ENCODE measurements at regions of chr3 and their contacts with region 1.

Region 1: DNA sequence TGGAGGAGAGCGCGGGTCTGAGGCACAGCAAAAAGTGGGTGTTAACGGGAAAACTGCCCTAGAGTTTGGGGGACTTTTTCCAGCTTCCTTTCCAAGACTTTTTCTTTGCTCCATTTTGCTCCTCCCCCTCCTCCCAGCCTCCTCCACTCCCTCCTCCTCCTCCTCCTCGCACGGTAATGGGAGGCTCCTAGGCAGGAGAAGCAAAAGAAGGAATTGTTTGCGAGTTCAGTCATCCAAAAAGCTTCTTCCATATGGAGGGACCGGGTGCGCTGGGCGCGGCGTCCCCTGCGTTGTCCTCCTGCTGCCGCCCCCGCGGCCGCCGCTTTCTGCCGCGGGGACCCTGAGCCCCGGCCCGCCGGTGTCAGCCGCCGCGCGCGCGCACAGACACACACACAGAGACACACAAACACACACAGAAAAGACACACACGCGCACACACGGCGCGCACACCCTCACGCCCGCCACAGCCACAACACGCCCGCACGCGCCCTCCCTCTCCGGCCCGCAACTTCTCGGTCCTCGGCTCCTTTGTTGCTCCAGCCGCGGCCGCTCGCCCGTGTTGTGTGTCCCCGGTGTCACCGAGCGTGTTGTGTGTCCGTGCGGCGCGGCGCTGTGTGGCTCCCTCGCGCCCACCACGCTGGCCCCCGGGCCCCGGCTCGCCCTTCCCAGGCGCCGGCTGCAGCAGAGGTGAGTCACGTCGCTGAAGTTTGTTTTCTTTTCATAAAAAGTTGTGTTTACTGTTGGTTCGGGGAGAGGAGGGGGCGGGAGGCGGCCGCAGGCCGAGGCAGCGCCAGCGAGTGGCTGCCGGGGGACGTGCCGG is at the start of gene BOC:
- DNase-seq: peak in 3 of 10 donors; percentile 18 to 86 (median 86)

Region 2: DNA sequence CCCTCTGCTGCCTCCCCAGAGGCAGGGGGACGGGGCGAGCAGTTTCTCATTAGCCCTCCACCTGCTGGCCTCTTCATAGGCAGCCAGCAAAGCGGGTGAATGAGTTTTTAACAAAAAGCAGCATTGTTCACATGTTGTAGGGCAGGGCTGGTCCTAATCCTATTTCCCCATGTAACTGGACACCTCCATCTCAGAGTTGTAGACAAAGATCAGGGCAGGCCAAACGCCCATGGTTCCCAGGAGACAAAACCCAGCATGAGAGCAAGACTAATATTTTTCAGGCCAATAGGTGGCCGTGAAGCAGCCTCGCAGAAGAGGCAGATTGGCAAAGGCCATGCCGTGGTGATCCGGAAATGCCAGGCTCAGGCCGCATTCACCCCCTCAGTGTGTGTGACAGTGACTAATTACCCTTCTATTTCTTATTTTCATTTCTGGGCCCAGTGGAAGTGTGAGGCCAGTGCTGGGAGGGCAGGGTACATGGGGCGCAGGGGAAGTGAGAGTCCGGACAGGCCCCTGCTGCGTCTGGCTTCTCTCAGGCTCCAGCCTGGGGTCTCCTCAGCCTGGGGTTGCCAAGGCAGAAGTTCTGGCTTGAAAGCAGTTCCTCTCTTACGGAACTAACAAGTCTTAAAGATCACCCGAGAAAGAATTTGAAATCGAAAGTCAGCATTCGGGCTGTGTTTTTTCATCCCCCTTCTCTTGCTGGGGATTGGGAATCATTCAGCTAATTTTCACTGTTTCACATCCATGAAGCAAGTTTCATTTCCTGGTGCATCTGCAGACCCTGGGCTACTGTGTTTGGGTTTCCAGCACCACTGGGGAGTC is 64.6 kb after region 1 on chr3:
- intact Hi-C with region 1: loop called (anchors 5 kb)
- DNase-seq: peak in 3 of 10 donors; percentile 27 to 86 (median 71)

Region 3: GRCh38 chr3:113634782-113635474 is 423.4 kb after region 1 on chr3:
- intact Hi-C with region 1: no loop called
- DNase-seq: no peak

Measured in posterior cingulate gyrus (tissue), 11 donors.